SK-N-SH (cell line): ENCODE measurements at regions of chr7 and their contacts with region 1.

Region 1: DNA sequence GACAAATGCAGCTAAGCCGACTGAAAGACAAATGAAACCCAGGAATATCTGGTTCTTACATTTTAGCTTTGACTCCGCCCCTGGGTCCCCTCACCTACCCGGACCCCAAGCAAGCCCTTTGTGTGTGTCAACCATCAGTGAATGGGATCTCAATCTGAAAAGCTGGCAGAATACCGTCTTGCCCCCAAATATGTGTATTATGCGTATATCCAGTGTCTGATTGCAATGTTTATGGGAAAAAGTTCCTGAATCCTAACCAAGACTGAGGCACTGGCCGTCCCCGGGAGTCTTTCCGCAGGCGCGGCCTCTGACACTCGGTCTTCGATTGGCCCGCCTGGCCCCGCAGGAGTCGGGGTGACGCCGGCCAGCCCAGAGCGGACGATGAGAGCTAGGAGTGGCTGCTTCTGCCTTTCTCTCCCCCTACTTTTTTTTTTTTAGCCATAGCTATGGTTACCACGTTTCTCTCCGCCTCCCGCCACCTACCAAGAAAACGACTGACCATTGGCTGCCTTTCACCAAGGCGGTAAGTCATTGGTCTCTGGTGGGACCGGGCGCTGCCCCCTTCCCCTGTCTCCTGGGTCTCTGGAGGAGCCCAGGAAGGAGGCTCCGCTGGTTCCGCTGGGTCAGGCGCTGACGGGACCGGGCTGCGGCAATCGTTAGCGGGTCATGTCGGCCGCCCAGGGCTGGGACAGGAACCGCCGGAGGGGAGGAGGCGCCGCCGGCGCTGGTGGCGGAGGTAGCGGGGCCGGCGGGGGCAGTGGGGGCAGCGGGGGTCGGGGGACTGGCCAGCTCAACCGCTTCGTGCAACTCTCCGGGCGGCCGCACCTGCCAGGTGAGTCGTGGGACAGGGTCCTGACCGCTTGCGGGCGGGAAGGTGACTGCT is at the start of gene KLHDC10:
- DNase-seq: peak; percentile 99
- H3K4me3 ChIP-seq: peak within 1 kb of the TSS; percentile 72 to 90
- H3K27ac ChIP-seq: peak within 1 kb of the TSS; percentile 60 to 82
- H3K4me1 ChIP-seq: peaks cover 0 to 14% of the 10 kb centered on the region in 2 experiments; a peak in 2 of 4 replicates
- H3K27me3 ChIP-seq: no peaks in the 10 kb centered on the region
- CTCF ChIP-seq: no peak
- EP300 ChIP-seq: no peak; a peak in 2 of 4 replicates
- RAD21 ChIP-seq: peak; percentile 11; the same call in 1 of the 2 replicates
- polyA plus RNA-seq, gene KLHDC10: 15.9 and 17.8 TPM in 2 replicates

Region 2: DNA sequence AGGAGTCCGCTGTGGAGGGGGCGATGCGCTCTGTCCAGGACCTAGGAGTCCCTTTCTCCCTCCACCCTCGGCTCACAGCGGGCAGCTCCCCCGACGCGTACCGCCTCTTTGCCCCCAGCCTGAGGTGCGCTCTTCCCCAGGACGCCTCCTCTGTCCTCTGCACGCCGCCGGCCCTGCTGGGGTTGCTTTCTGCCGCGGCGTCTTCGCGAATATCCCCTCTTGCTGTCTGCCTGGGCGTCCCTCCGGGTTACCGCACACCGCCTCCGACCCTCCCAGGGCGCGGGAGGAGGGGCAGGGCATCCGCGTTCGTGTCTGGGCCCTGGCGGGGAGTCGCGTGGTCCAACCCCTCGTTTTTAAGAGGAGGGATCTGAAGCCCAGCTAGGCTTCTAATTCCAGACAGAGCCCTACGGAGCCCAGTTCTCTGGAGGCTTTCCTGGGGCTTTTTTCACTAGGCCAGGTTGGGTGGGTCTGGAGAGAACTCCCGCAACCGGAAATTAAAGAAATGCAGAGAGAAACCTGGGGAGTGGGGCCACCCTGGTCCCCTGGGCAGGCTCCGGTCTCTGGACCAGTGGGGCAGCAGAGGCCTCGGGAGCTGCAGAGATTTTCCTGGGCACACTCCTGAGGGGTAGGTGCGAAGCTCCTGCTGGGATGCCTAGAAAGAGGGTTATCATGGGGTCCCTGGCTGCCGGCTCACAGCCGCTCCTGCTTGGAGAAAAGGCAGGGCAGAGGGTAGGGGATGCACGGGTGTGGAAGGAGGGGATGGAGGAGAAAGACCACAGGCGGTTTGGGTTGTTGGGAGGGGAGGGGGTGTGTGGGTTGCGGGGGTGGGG is 284.3 kb before region 1 on chr7:
- CTCF ChIA-PET with region 1: no interaction called
- POLR2A ChIA-PET with region 1: no interaction called
- DNase-seq: no peak
- H3K4me3 ChIP-seq: no peak overlapping the region
- H3K27ac ChIP-seq: no peak overlapping the region
- H3K4me1 ChIP-seq: peaks cover 13 to 31% of the 10 kb centered on the region in 2 experiments; a peak in 2 of 4 replicates
- H3K27me3 ChIP-seq: peaks cover 30% of the 10 kb centered on the region
- CTCF ChIP-seq: no peak
- EP300 ChIP-seq: no peak
- RAD21 ChIP-seq: no peak

Region 3: DNA sequence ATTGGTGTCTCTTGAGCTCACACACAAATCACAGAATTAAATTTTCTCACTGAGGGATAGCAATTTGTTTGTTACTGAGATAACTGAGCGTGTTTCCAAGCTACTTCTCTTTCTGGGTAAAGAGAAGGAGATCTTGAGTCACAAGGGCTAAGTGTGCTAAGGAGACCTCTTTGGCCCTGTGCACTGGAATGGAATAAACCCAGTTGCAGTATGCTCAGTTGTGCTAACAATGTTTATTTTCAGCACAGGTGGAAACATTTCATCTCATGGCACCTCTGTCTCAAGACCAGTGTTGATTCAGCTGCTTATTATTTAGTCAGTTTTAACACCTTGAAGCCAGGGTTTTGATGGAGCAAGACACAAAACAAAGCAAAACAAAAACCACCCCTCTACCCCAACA is 94.9 kb before region 1 on chr7:
- CTCF ChIA-PET with region 1: no interaction called
- POLR2A ChIA-PET with region 1: no interaction called
- DNase-seq: no peak
- H3K4me3 ChIP-seq: no peak overlapping the region
- H3K27ac ChIP-seq: no peak overlapping the region
- H3K4me1 ChIP-seq: no peaks in the 10 kb centered on the region; a peak in 1 of 4 replicates
- H3K27me3 ChIP-seq: no peaks in the 10 kb centered on the region
- CTCF ChIP-seq: no peak
- EP300 ChIP-seq: no peak
- RAD21 ChIP-seq: no peak

Region 4: DNA sequence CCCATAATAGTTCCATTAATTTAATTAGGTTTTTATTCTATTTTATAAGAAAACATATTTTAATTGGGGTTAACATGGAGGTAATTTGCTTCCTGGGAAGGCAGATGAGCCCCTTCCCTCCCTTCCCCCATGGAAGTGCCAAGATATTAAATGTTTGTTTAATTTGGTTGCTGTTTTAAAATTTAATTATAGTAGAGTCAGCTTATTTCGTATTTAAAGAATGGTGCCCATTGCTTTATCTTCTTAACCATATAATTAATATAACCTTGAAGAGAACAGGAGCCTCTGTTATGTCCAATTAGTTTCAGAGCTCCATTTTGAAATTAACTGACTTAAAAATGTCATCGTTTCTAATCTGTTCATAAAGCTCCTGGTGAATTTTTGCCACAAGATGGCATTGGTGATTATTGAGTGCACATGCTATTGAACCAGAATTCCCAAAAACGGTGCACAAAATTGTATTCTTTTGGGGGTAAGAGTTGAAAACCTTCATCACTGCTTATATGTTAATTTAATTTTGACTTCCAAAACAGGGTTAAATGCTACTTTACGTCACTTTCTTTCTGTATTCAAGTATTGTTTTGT is 26.1 kb after region 1 on chr7:
- CTCF ChIA-PET with region 1: interaction called, 13 read pairs
- POLR2A ChIA-PET with region 1: no interaction called
- DNase-seq: no peak
- H3K4me3 ChIP-seq: no peak overlapping the region
- H3K27ac ChIP-seq: no peak overlapping the region
- H3K4me1 ChIP-seq: peaks cover 0 to 2% of the 10 kb centered on the region in 2 experiments; a peak in 1 of 4 replicates
- H3K27me3 ChIP-seq: no peaks in the 10 kb centered on the region
- CTCF ChIP-seq: peak; percentile 48
- EP300 ChIP-seq: no peak
- RAD21 ChIP-seq: peak; percentile 48

Region 5: DNA sequence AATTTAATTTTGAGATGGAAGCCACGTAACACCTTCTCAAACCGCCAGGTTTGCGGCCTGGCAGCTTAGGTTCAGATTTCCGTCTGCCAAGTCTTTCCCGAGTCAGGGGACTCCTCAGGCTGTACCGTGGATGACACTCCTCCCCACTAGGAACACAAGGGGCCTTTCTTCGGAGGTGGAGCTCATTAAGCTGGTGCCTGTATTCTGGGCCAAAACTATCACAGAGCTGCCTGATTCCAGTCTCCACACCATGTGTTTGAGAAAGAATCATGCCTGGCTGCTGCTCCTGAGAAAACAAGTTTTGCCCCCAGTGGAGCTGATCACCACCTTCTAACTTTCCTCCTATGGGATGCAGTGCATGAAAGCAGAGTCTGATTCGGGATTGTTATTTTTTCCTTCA is 90.2 kb after region 1 on chr7:
- CTCF ChIA-PET with region 1: interaction called, 20 read pairs
- POLR2A ChIA-PET with region 1: no interaction called
- DNase-seq: no peak
- H3K4me3 ChIP-seq: no peak overlapping the region
- H3K27ac ChIP-seq: no peak overlapping the region
- H3K4me1 ChIP-seq: no peaks in the 10 kb centered on the region; a peak in 1 of 4 replicates
- H3K27me3 ChIP-seq: no peaks in the 10 kb centered on the region
- CTCF ChIP-seq: no peak
- EP300 ChIP-seq: no peak
- RAD21 ChIP-seq: no peak

Region 6: DNA sequence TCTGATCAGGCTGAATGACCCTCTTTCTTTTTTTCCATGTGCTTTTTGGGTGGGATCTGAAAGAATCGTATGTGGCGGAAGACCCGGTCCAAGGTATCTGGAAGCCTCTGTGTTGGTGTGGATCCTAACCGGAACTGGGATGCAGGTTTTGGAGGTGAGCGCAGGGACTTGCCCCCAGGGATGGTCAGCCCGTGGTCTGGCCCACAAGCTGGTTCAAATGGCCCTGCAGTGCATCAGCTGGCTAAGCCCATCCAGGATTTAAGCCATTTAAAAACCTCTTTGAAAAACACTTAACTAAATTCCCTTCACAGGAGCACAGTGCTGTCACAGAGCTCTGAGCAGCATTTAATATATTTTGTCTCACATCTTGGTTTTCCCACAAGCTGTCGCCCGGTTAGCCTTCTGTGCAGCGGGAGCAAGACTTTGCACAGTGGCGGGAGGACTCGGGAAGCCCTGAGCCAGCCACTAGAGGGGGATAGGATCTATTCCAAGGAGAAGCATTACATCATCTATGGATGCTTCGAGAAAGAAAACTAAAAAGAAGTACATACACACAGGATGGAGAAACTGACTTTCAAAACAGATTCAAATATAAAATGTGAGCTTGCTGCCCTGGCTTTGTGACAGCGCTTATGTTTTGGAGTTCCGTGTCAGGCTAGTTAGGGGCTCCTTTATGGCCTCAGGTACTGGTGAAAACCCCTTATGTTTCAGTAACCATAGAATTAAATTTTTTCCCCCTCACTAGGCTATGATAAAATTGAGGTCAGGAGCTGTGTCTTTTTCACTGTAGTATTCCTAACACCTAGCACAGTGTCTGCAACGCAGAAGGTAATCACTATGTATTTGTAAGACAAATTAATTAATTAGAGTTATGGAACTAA is 207.8 kb after region 1 on chr7:
- CTCF ChIA-PET with region 1: interaction called, 18 read pairs
- POLR2A ChIA-PET with region 1: no interaction called
- DNase-seq: peak; percentile 77
- H3K4me3 ChIP-seq: no peak overlapping the region
- H3K27ac ChIP-seq: peak overlapping the region in 1 of 2 experiments; percentile 8; a peak in 1 of 4 replicates
- H3K4me1 ChIP-seq: peaks cover 3 to 13% of the 10 kb centered on the region in 2 experiments; a peak in 3 of 4 replicates
- H3K27me3 ChIP-seq: no peaks in the 10 kb centered on the region
- CTCF ChIP-seq: peak; percentile 73
- EP300 ChIP-seq: no peak
- RAD21 ChIP-seq: peak; percentile 79

Region 7: GRCh38 chr7:130405003-130405402 is 334.8 kb after region 1 on chr7:
- CTCF ChIA-PET with region 1: no interaction called
- POLR2A ChIA-PET with region 1: no interaction called
- DNase-seq: no peak
- H3K4me3 ChIP-seq: no peak overlapping the region
- H3K27ac ChIP-seq: no peak overlapping the region
- H3K4me1 ChIP-seq: peaks cover 8 to 29% of the 10 kb centered on the region in 2 experiments; a peak in 3 of 4 replicates
- H3K27me3 ChIP-seq: no peaks in the 10 kb centered on the region
- CTCF ChIP-seq: no peak
- EP300 ChIP-seq: no peak
- RAD21 ChIP-seq: no peak

Region 8: GRCh38 chr7:130733931-130734814 is 664.0 kb after region 1 on chr7 and contains the start of gene KLF14:
- CTCF ChIA-PET with region 1: interaction called, 10 read pairs
- POLR2A ChIA-PET with region 1: no interaction called
- DNase-seq: peak; percentile 88
- H3K4me3 ChIP-seq: peak within 1 kb of the TSS; percentile 58 to 63
- H3K27ac ChIP-seq: no peak within 1 kb of the TSS
- H3K4me1 ChIP-seq: peaks cover 0 to 8% of the 10 kb centered on the region in 2 experiments; a peak in 2 of 4 replicates
- H3K27me3 ChIP-seq: peaks cover 86% of the 10 kb centered on the region
- CTCF ChIP-seq: no peak
- EP300 ChIP-seq: no peak
- RAD21 ChIP-seq: no peak
- polyA plus RNA-seq, gene KLF14: 0.02 TPM in 1 of 2 replicates, not detected in the other